Activated T-helper 2 cell treated with anti-CD3 and anti-CD28 coated beads, Interferon-gamma antibody, Interleukin-2, Interleukin-4, amounts not matched to agents 10 μg/mL and 5 μg/mL and 100 μg/mL, durations not matched to agents 14 hours and 24 hours and 36 hours (primary cell): ENCODE measurements at regions of chr4 and their contacts with region 1.

Region 1: GRCh38 chr4:80072744-80073472 is at the start of gene ANTXR2:
- DNase-seq: peak; percentile 65
- H3K4me3 Mint-ChIP-seq: peak within 1 kb of the TSS; percentile 87
- H3K27ac Mint-ChIP-seq: peak within 1 kb of the TSS; percentile 75
- H3K4me1 Mint-ChIP-seq: peaks cover 71% of the 10 kb centered on the region
- H3K27me3 Mint-ChIP-seq: peaks cover 2% of the 10 kb centered on the region
- total RNA-seq, gene ANTXR2: 3.2 and 3.6 TPM in 2 replicates

Region 2: GRCh38 chr4:78938868-78939666 is 1133.8 kb before region 1 on chr4 and contains the start of gene PAQR3:
- intact Hi-C with region 1: loop called (anchors 5 kb)
- DNase-seq: peak; percentile 77
- H3K4me3 Mint-ChIP-seq: peak within 1 kb of the TSS; percentile 91
- H3K27ac Mint-ChIP-seq: peak within 1 kb of the TSS; percentile 63
- H3K4me1 Mint-ChIP-seq: peaks cover 35% of the 10 kb centered on the region
- H3K27me3 Mint-ChIP-seq: peaks cover 26% of the 10 kb centered on the region
- total RNA-seq, gene PAQR3: 11.0 and 13.1 TPM in 2 replicates

Region 3: GRCh38 chr4:79831701-79832514 is 241.0 kb before region 1 on chr4:
- intact Hi-C with region 1: loop called (anchors 5 kb)
- DNase-seq: no peak
- H3K4me3 Mint-ChIP-seq: no peak overlapping the region
- H3K27ac Mint-ChIP-seq: no peak overlapping the region
- H3K4me1 Mint-ChIP-seq: peaks cover 4% of the 10 kb centered on the region
- H3K27me3 Mint-ChIP-seq: peaks cover 20% of the 10 kb centered on the region

Region 4: GRCh38 chr4:80007745-80008149 is 65.2 kb before region 1 on chr4:
- intact Hi-C with region 1: loop called (anchors 2 kb)
- DNase-seq: no peak
- H3K4me3 Mint-ChIP-seq: no peak overlapping the region
- H3K27ac Mint-ChIP-seq: peak overlapping the region; percentile 78
- H3K4me1 Mint-ChIP-seq: peaks cover 60% of the 10 kb centered on the region
- H3K27me3 Mint-ChIP-seq: no peaks in the 10 kb centered on the region

Region 5: DNA sequence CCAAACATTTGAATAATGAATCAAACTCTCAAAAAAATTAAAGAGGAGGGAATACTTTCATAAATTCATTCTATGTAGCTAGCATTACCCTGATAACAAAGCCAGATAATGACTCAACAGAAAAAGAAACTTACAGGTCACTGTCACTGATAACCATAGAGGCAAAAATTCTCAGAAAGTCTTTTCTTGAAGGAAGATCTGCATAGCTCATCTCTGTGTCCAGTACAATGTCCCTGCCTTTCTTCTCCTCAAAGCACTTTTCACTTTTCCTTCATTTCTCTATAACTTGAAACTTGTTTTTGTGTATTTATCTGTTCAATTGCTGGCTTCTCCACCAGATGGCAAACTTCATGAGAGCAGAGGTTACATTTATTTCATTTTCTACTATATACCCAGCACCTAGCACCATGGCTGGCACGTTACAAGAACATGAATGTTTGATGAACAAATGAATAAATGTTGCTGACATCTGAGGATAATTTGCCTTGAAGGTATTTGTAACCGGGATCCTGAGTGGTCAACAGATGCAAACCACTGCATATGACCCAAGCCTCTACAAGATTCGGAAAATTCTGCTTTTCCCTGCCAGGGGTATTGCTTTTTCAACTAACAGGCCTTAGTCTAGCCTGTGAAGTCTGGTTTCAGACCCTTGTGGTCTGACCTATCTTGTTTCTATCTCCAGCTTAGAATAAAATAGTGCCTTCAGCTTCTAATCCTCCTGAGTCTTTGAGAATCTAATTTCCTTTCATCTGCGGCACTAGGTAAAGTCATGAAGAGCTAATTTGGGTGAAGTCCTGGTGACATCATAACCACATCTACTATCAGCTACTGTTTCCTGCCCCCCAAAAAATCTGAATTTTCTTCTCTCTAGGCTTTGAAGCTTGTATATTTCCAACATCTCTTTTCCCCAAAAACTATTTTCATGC is 52.6 kb after region 1 on chr4:
- intact Hi-C with region 1: loop called (anchors 1 kb)
- DNase-seq: peak; percentile 30
- H3K4me3 Mint-ChIP-seq: peak overlapping the region; percentile 1
- H3K27ac Mint-ChIP-seq: peak overlapping the region; percentile 55
- H3K4me1 Mint-ChIP-seq: peaks cover 59% of the 10 kb centered on the region
- H3K27me3 Mint-ChIP-seq: no peaks in the 10 kb centered on the region

Region 6: GRCh38 chr4:80153874-80154544 is 81.1 kb after region 1 on chr4:
- intact Hi-C with region 1: loop called (anchors 1 kb)
- DNase-seq: no peak
- H3K4me3 Mint-ChIP-seq: peak overlapping the region; percentile 59
- H3K27ac Mint-ChIP-seq: peak overlapping the region; percentile 97
- H3K4me1 Mint-ChIP-seq: peaks cover 18% of the 10 kb centered on the region
- H3K27me3 Mint-ChIP-seq: peaks cover 3% of the 10 kb centered on the region